Endothelial cell of umbilical vein (primary cell): ENCODE measurements at regions of chr4 and their contacts with region 1.

Region 1: DNA sequence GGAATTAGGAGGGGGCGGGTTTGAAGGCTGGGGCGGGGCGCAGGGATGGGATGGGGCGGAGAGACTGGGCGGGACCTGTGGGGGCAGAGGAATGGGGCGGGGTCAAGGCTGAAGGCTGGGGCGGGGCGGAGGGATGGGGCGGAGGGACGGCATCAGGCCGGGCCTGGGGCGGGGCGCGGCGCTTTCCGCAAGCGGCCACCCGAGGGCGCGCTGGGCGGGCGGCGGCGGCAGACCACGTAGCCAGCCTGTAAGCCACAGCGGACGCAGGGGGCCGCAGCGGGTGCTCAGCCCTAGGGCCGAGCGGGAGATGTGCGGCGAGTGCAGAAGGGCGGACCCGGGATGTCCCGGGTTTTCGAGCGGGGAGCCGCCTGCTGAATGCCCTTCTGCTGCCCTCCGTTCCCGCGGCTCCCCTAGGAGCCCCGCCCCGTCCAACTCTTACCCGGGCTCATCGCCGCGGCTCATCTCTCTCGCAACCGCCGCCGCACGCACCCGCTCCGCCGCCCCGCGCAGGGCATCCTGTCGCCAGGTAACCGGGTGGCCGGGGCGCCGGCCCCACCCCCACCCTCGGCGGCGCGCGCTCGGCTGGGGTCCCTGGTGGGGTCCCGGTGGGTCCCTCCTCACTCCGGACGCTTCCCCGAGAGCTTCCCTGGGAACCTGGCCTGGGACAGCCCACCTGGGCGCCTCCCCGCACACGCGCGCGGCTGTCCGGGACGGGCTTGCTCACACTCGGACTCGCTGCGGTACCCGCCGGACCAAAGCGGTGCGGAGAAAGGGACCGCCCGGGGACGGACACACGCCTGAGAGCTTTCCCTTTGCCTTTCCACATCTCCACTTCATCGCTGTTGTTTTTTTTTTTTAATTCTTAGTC is at the start of gene CCDC110:
- DNase-seq: peak; percentile 90
- H3K4me3 ChIP-seq: peak within 1 kb of the TSS; percentile 43 to 80 (median 57)
- H3K27ac ChIP-seq: peak within 1 kb of the TSS; percentile 41
- H3K4me1 ChIP-seq: peaks cover 8% of the 10 kb centered on the region
- H3K27me3 ChIP-seq: peaks cover 15% of the 10 kb centered on the region in 2 experiments
- CTCF ChIP-seq: peak; percentile 32 to 57
- POLR2A ChIP-seq: no peak
- total RNA-seq, gene CCDC110: 0.28 and 0.71 TPM in 2 replicates

Region 2: GRCh38 chr4:185209031-185209851 is 262.2 kb before region 1 on chr4 and contains the start of gene SNX25:
- CTCF ChIA-PET with region 1: no interaction called
- POLR2A ChIA-PET with region 1: no interaction called
- dilution Hi-C with region 1: no loop called
- intact Hi-C with region 1: loop called (anchors 1 kb)
- DNase-seq: peak; percentile 82
- H3K4me3 ChIP-seq: peak within 1 kb of the TSS; percentile 67 to 90 (median 88)
- H3K27ac ChIP-seq: peak within 1 kb of the TSS; percentile 51
- H3K4me1 ChIP-seq: peaks cover 31% of the 10 kb centered on the region
- H3K27me3 ChIP-seq: no peaks in the 10 kb centered on the region
- CTCF ChIP-seq: no peak
- POLR2A ChIP-seq: peak; percentile 56
- total RNA-seq, gene SNX25: 16.1 and 20.2 TPM in 2 replicates

Region 3: DNA sequence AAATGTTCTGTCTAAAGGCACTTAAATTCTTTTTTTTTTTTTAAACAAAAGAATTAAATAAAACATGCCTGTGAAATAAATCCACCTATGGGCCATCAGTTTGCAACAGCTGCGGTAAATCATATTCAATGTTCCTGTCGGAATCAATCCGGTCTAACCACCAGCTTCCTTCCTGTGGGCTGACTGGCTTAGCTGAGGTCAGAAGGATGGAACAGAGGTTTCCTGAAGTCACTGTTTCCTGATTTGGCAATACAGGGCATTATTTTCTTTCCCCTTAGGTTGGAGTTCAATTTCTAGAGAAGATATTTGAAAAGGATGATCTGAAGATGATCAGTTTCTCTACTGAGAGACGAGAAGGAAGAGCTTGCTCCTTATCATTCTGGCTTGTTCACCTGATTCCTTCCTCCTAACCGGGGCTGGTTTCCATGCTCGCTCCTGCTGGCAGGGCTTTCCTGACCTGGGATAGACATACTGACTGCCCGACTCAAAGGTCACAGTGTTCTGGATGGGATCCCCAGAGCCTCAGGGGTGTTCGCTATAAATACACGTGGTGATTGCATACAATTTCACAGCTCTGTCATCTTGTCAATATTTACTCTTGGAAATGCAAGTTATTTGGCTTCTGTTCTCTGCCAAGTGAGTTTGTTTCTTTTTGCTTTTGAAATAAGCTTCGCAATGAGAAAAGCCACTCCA is 42.2 kb after region 1 on chr4:
- CTCF ChIA-PET with region 1: interaction called, 5 read pairs
- POLR2A ChIA-PET with region 1: no interaction called
- dilution Hi-C with region 1: no loop called
- intact Hi-C with region 1: loop called (anchors 1 kb)
- DNase-seq: peak; percentile 86
- H3K4me3 ChIP-seq: peak overlapping the region in 1 of 3 experiments; percentile 10
- H3K27ac ChIP-seq: peak overlapping the region; percentile 85
- H3K4me1 ChIP-seq: peaks cover 24% of the 10 kb centered on the region
- H3K27me3 ChIP-seq: no peaks in the 10 kb centered on the region
- CTCF ChIP-seq: no peak
- POLR2A ChIP-seq: no peak

Region 4: DNA sequence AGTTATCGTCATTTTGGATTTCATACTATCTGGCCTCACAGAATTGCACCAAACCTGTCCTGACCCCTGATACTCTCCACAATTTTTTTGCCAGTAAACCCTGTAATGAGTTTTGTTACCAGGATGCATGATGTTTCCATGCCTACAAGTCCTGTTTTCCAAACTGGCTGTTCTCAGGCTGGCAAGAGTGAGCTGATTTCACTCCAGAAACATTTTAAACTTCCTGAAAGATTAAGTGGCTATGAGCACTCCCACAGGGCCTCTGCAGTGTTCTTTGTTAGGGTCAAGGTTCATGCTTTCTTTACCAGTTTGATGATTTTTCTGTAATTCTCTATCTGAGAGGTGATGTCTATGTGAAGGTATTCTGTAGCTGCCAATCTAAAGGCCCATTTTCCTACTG is 95.5 kb after region 1 on chr4:
- CTCF ChIA-PET with region 1: no interaction called
- POLR2A ChIA-PET with region 1: no interaction called
- dilution Hi-C with region 1: no loop called
- intact Hi-C with region 1: loop called (anchors 2 kb)
- DNase-seq: peak; percentile 93
- H3K4me3 ChIP-seq: no peak overlapping the region
- H3K27ac ChIP-seq: peak overlapping the region; percentile 87
- H3K4me1 ChIP-seq: peaks cover 17% of the 10 kb centered on the region
- H3K27me3 ChIP-seq: no peaks in the 10 kb centered on the region
- CTCF ChIP-seq: no peak
- POLR2A ChIP-seq: no peak